ENCODE measurements at regions of chr3 and their contacts with region 1.

Region 1: GRCh38 chr3:192917404-192918274 is at the start of gene MB21D2:
- DNase-seq: peak; percentile 91 to 95 (median 95)
- ATAC-seq: peak; percentile 95 to 96
- H3K4me3 ChIP-seq: peak within 1 kb of the TSS; percentile 94
- H3K27ac ChIP-seq: peak within 1 kb of the TSS; percentile 90
- H3K4me1 ChIP-seq: no peaks in the 10 kb centered on the region
- H3K27me3 ChIP-seq: no peaks in the 10 kb centered on the region
- total RNA-seq, gene MB21D2: 3.1 to 3.9 (median 3.7) TPM

Region 2: DNA sequence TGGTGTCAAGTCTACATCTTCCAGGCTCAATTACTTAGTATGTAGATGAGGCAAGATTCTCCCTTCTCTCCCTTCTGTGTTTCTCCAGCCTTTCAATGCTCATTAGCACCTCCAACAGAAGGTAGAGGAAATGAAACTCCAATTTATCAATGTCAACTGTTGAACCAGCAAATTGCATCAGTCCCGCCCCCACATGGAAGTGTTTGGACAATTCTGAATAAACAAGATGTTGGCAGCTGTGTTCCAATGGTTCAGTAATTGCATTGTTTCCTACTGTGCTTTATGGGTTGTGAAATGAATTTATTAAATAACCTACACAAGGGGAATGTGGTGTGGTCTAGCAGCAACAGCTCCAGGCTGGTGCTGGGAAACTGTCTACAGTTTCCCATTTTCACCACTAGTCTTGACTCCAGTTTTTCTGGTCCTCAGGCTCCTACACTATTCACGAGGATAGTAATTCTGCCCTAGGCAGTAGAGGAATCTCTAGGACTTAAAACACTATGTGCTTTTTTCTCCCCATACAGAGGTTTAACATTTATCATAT is 91.9 kb before region 1 on chr3:
- intact Hi-C with region 1: loop called in 2 of 4 experiments (anchors 10 kb)
- DNase-seq: no peak
- ATAC-seq: peak; percentile 44 to 45
- H3K4me3 ChIP-seq: no peak overlapping the region
- H3K27ac ChIP-seq: no peak overlapping the region
- H3K4me1 ChIP-seq: peaks cover 1% of the 10 kb centered on the region
- H3K27me3 ChIP-seq: no peaks in the 10 kb centered on the region

Region 3: DNA sequence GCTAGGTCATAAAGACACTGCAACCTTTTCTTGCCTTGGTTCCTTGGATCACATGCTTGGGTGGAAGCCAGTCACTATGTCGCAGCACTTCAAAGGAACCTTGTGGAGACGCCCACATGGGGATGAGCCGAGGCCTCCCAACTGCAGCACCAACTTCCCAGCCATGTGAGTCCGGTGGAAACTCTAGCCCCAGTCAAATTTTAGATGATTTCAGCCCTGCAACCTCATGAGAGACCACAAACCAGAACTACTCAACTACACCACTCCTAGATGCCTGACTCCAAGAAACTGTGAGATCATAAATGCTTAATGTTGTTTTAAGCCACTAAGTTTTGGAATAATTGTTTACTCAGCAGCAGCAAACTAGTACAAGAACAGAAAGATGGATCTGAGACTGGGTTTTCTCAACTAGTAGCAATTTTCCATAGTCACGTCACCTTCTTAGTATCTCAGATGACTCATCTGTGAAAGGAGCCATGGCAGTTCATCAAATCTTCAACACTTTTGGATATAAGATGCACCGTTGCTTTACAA is 86.5 kb before region 1 on chr3:
- intact Hi-C with region 1: loop called in 2 of 4 experiments (anchors 10 kb)
- DNase-seq: no peak
- ATAC-seq: peak in 1 of 2 donors; percentile 31
- H3K4me3 ChIP-seq: no peak overlapping the region
- H3K27ac ChIP-seq: peak overlapping the region; percentile 19
- H3K4me1 ChIP-seq: peaks cover 7% of the 10 kb centered on the region
- H3K27me3 ChIP-seq: no peaks in the 10 kb centered on the region

Region 4: GRCh38 chr3:192851821-192852424 is 65.7 kb before region 1 on chr3:
- intact Hi-C with region 1: loop called in 1 of 4 experiments (anchors 10 kb)
- DNase-seq: peak; percentile 67 to 71 (median 69)
- ATAC-seq: peak; percentile 69 to 79
- H3K4me3 ChIP-seq: no peak overlapping the region
- H3K27ac ChIP-seq: no peak overlapping the region
- H3K4me1 ChIP-seq: no peaks in the 10 kb centered on the region
- H3K27me3 ChIP-seq: no peaks in the 10 kb centered on the region

Region 5: GRCh38 chr3:192879336-192880106 is 38.1 kb before region 1 on chr3:
- intact Hi-C with region 1: no loop called
- DNase-seq: no peak
- ATAC-seq: peak; percentile 60 to 71
- H3K4me3 ChIP-seq: no peak overlapping the region
- H3K27ac ChIP-seq: no peak overlapping the region
- H3K4me1 ChIP-seq: peaks cover 6% of the 10 kb centered on the region
- H3K27me3 ChIP-seq: no peaks in the 10 kb centered on the region

Region 6: GRCh38 chr3:193040836-193041672 is 123.4 kb after region 1 on chr3:
- intact Hi-C with region 1: loop called in 2 of 4 experiments (anchors 5 to 10 kb)
- DNase-seq: no peak
- ATAC-seq: no peak
- H3K4me3 ChIP-seq: no peak overlapping the region
- H3K27ac ChIP-seq: no peak overlapping the region
- H3K4me1 ChIP-seq: no peaks in the 10 kb centered on the region
- H3K27me3 ChIP-seq: no peaks in the 10 kb centered on the region